Right ventricle myocardium superior (tissue), 1 donor: ENCODE measurements at regions of chr1 and their contacts with region 1.

Region 1: DNA sequence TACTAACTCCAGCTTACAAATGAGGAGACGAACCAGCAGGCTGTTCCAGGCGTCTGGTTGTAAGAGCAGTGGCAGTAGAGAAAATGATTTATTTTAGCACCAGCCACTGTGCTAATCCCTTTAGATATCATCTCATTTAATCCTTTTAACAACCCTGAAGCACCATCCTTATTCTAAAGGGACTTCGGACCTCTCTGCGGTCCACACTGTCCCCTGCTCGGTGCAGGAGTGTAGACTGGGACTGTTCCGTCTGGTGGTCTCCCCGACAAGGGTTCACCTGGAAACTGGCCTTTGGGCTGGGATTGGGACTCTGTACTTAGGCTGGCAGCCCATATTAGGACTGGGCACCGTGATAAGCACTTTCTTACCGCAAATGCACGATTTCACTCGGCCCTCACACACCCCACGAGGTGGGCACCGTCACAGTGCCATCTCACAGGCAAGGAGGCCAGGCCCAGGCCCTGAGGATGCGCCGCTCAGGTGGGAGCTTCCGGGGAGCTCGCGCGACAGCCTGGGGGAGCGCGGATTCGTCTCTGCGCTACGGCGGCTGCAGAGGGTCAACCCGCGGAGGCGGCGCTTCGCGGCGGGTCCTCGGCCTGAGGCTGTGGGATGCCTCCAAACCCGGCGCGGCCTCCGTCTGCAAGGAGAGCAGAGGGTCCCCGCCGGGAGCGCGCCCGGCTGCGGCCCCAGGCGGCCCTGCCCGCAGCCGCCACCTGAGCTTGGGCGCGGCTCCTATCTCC is 45.2 kb downstream of the ATP1A1 start:
- DNase-seq: peak; percentile 91
- ATAC-seq: peak; percentile 87

Region 2: GRCh38 chr1:116377541-116378529 is 40.4 kb before region 1 on chr1:
- intact Hi-C with region 1: loop called (anchors 5 kb)
- DNase-seq: peak; percentile 87
- ATAC-seq: peak; percentile 39

Region 3: DNA sequence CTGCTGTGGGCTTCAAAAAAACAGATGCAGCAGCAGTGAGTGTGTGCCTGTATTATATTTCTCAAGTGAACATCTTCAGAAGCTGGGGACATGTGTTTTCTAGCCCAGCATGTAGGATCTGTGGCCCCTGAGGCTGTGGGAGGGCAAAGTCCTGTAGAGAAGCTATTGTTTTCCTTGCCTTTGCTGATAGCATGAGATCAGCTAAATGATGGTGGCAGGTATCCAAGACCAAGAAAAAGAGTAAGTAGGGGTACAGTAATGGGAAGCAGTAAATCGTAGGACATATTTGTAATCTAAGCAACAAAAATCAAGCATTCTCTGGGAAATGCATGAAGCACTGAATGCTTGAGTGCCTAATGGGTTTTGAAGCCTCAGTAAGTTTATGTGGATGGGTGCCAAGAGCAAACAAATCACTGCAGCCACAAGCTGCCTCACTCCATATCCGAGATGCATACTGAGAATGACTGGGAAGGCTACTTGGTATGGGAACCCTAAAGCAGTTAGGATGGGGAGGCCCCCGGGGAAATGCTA is 54.2 kb after region 1 on chr1:
- intact Hi-C with region 1: loop called (anchors 5 kb)
- DNase-seq: no peak
- ATAC-seq: no peak

Region 4: DNA sequence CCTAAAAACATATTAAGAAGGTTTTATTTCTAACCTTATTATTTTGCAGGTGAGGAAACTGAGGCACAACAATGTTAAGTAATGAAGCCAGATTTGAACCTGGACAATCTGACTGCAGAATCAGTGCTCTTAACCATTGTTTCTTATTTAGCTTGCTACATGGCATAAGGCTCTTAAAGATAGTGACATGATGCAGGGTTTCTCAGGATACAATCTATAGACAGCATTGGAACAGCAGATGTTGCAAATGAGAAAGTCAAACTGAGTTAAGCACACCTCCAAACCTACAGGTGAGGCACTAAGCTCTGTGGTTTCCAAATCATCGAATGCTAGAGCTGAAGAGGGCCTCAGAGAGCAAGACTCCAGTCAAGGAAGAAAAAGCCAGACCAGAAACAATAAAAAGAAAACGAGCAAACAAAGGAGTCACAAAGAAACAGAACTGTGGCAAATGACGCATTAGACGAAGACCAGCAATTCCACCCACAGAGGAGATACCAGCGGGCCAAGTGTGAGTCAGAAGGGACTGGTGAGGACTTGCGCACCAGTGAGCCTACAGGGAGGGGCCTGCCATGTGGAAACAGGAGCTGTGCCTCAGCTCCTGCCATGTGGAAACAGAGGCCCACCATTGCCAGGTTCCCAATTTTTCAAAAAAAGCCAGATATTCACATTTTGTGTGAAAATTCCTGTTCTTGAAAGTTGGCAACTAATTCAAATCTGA is 138.2 kb after region 1 on chr1:
- intact Hi-C with region 1: no loop called
- DNase-seq: peak; percentile 66
- ATAC-seq: peak; percentile 72